Posterior vena cava (tissue), 2 donors: ENCODE measurements at regions of chr9 and their contacts with region 1.

Region 1: GRCh38 chr9:127503947-127504782 is 52.9 kb downstream of the LRSAM1 start:
- DNase-seq: peak; percentile 95

Region 2: DNA sequence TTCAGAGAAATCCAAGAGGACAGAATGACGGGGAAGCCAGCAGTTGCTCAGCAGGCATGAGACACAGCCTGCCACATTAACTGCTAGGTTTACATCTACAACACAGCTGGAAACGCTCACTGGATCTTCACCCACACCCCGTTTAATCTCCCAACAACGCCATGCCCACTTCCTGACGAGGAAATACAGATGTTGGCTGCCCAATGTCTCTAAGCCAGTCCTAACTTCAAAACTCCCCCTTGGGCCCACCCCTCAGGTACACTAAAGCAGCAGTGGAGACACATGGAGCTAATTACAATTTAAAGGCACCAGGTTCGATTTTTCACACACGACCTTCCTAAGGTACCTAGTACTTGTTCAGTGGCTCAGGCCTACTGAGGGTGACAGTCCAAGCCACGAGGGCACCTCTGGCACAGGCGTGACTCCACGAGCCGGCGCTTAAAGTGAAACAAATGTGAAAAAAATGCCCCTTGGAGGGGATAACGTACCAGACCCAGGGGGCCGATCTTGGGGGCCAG is 53.9 kb before region 1 on chr9:
- intact Hi-C with region 1: no loop called
- DNase-seq: no peak

Region 3: DNA sequence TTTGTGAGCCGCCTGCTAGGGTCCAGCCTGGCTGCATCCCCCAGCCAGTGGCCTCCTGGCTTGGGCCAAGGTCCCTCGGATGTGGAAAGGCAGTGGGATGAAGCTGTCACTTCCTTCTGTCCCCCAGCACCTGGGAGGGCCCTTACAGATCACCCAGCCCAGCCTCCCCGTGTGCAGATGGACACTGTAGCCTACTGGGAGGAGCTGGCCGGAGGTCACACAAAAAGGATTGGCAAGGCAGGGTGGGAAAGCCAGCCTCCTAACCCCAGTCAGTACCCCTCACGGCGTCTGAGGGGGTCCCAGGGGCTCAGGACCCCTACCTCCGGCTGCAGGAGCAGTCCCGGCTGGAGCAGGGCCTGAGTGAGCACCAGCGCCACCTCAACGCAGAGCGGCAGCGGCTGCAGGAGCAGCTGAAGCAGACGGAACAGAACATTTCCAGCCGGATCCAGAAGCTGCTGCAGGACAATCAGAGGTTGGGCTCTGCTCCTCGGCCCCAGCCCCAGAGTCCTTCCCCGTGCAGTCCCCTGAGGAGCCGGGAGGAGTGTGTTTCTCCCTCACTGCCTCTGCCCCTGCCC is 24.6 kb before region 1 on chr9:
- intact Hi-C with region 1: loop called in 1 of 2 experiments (anchors 2 kb)
- DNase-seq: no peak

Region 4: GRCh38 chr9:127545196-127546124 is 41.3 kb after region 1 on chr9:
- intact Hi-C with region 1: no loop called
- DNase-seq: no peak

Region 5: DNA sequence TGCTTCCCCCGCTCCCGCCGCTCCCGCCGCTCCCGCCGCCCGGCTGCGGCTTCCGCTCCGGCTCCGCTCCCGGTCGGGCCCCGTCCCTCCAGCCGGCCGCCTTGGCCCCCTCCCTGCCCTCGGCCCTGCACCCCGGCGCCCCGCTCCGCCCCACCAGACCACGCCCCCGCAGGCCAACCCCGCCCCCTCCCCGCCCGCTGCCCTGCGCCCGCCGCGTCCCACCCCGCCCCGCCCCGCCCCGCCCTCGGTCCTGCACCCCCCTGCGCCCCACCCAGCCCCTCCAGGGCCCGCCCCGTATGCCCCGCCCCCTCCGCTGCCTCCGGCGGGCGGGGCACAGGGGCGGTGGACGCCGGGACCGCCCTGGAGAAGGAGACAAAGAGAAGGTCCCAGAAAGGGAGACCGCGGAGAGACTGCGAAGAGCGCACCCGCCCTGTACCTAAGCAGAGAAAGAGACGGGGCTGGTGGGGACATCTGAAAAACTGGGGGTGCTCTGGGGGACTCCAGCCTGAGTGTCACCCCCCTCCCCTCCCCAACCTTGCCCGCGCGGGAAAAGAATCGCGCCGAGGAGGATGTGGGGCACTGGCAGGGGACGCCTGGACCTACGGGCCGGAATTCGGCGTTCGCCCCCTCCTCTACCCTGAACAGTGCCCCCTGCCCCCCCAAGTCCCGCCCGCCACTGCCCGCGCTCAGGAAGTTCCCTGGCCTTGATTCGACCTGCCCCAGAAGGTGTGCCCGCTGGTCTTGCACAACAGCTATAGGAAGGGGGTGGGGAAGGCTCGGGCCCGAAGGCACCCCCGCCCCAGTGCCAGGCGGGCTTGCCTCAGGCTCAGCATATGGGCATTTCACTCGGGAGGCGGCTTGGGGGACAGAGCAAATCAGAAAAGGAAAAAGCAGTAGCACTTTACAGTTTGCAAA is 65.1 kb after region 1 on chr9:
- intact Hi-C with region 1: loop called in 1 of 2 experiments (anchors 5 kb)
- DNase-seq: peak; percentile 92

Region 6: DNA sequence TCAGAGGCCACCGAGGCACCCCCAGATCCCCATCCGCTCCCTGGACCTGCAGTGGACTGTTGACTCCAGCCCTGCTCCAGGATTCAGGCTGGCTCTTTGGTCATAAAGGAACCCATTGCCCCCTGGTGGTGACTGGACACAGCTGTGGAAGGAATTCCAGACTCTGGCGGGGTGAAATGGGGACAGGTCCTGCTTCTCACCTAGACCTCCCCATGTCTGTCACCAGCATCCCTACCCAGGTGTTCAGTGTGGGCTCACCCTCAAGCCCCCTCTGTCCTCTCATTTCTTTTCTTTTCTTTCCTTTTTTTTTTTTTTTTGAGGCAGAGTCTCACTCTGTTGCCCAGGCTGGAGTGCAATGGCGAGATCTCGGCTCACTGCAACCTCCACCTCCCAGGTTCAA is 82.4 kb after region 1 on chr9:
- intact Hi-C with region 1: loop called (anchors 2 to 5 kb)
- DNase-seq: peak; percentile 91

Region 7: GRCh38 chr9:127723450-127723849 is 219.3 kb after region 1 on chr9:
- intact Hi-C with region 1: loop called in 1 of 2 experiments (anchors 10 kb)
- DNase-seq: no peak

Region 8: DNA sequence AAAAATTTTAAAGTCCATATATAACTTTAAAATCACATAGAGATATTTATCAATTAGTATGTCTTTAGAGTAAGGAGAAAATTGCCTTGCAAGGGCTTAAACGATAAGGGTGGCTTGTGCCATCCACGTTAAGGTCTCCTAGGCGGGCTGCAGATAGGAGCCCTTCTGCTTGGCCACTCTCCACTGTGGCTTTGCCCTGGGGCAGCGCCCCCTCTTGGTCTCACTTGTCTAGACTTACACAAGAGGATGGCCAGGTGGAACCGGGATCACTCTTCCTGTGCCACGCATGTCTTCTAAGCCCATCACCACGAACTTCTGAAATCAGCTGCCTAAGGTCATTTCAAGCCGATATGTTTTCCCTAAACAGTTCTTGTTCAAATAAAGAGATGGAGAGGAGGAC is 301.5 kb after region 1 on chr9:
- intact Hi-C with region 1: no loop called
- DNase-seq: no peak

Region 9: DNA sequence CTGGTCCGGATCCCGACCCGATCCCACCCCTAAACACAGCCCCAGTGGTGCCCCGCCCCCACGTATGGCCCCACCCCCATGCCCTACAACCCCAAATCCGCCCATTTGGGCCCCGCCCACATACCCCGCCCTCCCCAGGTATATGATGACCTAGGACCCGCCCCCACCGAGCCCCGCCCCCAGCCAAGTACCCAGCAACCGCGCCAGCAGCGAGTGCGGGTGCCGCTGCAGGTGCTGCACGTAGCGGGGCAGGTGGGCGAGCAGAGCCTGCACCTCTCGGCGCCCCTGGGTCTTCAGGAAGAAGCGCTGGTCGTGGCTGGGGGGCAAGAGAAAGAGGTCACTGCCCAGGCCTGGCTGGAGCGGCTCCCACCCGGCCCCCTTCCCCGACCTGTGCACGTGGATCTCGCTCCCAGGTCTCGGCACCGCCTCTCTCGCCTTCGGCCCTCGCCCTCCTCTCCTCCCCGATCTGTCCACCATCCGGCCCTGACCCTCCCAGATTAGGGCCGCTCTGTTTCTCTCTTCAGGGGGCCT is 423.4 kb after region 1 on chr9:
- intact Hi-C with region 1: loop called in 1 of 2 experiments (anchors 5 kb)
- DNase-seq: no peak